CD8-positive, alpha-beta T cell (primary cell): ENCODE measurements at regions of chr19 and their contacts with region 1.

Region 1: DNA sequence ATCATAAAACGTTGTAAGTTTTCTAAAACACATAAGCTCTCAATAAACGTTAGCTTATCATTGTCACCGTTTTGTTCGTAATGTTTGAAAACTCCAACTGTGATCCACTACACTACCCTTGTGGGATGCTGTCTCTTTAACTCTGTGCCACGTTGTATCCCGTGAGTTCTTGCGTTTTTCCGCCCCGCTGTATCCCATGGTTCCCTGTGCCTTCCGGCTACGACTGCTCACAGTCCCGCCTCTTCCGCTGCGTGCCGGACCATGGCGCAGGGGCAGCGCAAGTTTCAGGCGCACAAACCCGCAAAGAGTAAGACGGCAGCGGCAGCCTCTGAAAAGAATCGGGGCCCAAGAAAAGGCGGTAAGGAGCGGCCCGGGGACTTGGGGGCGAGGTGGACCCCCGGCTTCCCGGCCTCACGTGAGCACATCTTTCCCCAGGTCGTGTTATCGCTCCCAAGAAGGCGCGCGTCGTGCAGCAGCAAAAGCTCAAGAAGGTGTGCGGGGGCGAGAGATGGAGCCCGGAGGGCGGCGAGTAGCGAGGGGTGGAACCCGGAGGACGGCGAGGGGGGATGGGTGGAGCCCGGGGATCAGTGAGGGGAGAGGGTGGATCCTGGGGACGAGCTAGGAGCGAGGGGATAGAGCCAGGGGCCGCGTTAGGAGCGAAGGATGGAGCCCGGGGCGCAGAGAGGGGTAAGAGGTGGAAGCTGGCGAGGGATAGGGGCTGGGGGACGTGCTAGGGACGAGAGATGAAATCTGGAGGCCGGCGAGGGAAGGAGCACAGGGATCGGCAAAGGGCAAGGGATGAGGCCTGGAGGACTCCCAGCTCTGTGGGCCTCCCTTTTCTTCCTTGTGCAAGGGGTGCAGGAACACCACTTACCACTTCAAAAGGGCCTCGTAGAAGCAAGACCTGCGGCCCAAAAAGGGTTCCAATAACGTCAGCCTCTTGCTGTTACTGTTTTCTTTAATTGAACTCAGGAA is at the start of gene C19orf53:
- DNase-seq: peak; percentile 66 to 94 (median 87)
- ATAC-seq: peak; percentile 96
- H3K4me3 ChIP-seq: peak within 1 kb of the TSS; percentile 89 to 91
- H3K4me3 Mint-ChIP-seq: peak within 1 kb of the TSS; percentile 99
- H3K27ac ChIP-seq: peak within 1 kb of the TSS; percentile 83 to 85
- H3K27ac Mint-ChIP-seq: peak within 1 kb of the TSS; percentile 97
- H3K4me1 ChIP-seq: peaks cover 17% of the 10 kb centered on the region
- H3K4me1 Mint-ChIP-seq: peaks cover 25% of the 10 kb centered on the region
- H3K27me3 ChIP-seq: no peaks in the 10 kb centered on the region
- H3K27me3 Mint-ChIP-seq: no peaks in the 10 kb centered on the region
- CTCF ChIP-seq: no peak
- total RNA-seq, gene C19orf53: 116 TPM

Region 2: DNA sequence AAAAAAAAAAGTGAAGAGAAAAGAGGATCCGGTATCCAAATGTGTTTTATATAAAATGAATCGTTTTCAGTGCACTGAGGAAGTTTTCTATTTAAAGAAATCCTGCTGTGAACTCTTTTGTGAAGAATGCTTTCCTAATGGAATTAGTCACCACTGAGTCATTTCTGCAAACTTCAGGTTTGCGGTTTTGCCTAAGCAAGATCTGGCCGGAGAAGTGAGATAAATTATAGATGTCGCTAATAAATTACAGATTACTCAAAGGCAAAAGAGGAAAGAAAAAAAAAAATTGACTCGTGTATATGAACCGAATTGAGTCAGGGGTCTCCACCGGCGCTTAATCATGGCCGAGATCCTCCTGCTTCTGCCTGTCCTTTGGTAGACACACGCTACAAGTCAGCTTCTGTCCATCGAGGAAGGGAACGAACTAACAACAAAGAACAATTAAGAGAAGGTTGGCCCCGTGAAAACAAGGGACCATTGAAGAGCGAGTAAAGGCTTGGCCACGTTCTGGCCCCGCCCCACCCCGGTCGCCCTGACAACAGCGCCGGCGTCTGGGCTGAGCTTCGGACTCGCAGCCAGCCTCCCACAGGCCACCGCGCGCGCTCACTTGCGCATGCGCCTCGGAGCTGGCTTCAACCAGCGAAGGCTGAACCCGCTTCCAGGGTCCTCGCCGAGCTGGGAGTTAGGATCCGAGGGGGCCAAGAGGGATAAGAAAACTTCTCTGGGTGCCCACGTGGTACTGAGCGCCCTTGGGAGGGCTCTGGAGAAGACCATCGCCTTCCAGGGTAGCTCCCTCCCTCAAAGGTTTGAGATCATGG is 43.1 kb before region 1 on chr19:
- CTCF ChIA-PET with region 1: interaction called, 3 read pairs
- POLR2A ChIA-PET with region 1: interaction called, 6 read pairs
- intact Hi-C with region 1: loop called in 1 of 2 experiments (anchors 1 kb)
- DNase-seq: peak; percentile 87 to 97 (median 93)
- ATAC-seq: peak; percentile 100
- H3K4me3 ChIP-seq: peak overlapping the region; percentile 59 to 87
- H3K4me3 Mint-ChIP-seq: peak overlapping the region; percentile 90
- H3K27ac ChIP-seq: peak overlapping the region; percentile 57 to 59
- H3K27ac Mint-ChIP-seq: peak overlapping the region; percentile 74
- H3K4me1 ChIP-seq: peaks cover 7% of the 10 kb centered on the region
- H3K4me1 Mint-ChIP-seq: peaks cover 8% of the 10 kb centered on the region
- H3K27me3 ChIP-seq: no peaks in the 10 kb centered on the region
- H3K27me3 Mint-ChIP-seq: no peaks in the 10 kb centered on the region
- CTCF ChIP-seq: no peak

Region 3: GRCh38 chr19:13764101-13764807 is 10.2 kb before region 1 on chr19 and contains the start of gene MRI1:
- CTCF ChIA-PET with region 1: interaction called, 3 read pairs
- POLR2A ChIA-PET with region 1: interaction called, 12 read pairs
- intact Hi-C with region 1: loop called in 1 of 2 experiments (anchors 1 kb)
- DNase-seq: peak in 8 of 9 experiments; percentile 36 to 81 (median 68)
- ATAC-seq: peak; percentile 88
- H3K4me3 ChIP-seq: peak within 1 kb of the TSS; percentile 64 to 75
- H3K4me3 Mint-ChIP-seq: peak within 1 kb of the TSS; percentile 89
- H3K27ac ChIP-seq: peak within 1 kb of the TSS; percentile 69 to 76
- H3K27ac Mint-ChIP-seq: peak within 1 kb of the TSS; percentile 84
- H3K4me1 ChIP-seq: peaks cover 15% of the 10 kb centered on the region
- H3K4me1 Mint-ChIP-seq: peaks cover 17% of the 10 kb centered on the region
- H3K27me3 ChIP-seq: no peaks in the 10 kb centered on the region
- H3K27me3 Mint-ChIP-seq: no peaks in the 10 kb centered on the region
- CTCF ChIP-seq: no peak
- total RNA-seq, gene MRI1: 14.3 to 14.8 TPM

Region 4: GRCh38 chr19:13794757-13795589 is 20.5 kb after region 1 on chr19 and contains the start of gene ZSWIM4:
- CTCF ChIA-PET with region 1: interaction called, 4 read pairs
- POLR2A ChIA-PET with region 1: interaction called, 24 read pairs
- intact Hi-C with region 1: loop called (anchors 1 kb)
- DNase-seq: peak; percentile 83 to 96 (median 91)
- ATAC-seq: peak; percentile 85
- H3K4me3 ChIP-seq: peak within 1 kb of the TSS; percentile 73 to 80
- H3K4me3 Mint-ChIP-seq: peak within 1 kb of the TSS; percentile 92
- H3K27ac ChIP-seq: peak within 1 kb of the TSS; percentile 51 to 77
- H3K27ac Mint-ChIP-seq: peak within 1 kb of the TSS; percentile 89
- H3K4me1 ChIP-seq: peaks cover 27% of the 10 kb centered on the region
- H3K4me1 Mint-ChIP-seq: peaks cover 38% of the 10 kb centered on the region
- H3K27me3 ChIP-seq: no peaks in the 10 kb centered on the region
- H3K27me3 Mint-ChIP-seq: no peaks in the 10 kb centered on the region
- CTCF ChIP-seq: no peak
- total RNA-seq, gene ZSWIM4: 4.1 to 5.0 TPM